Tibial artery (tissue), 4 donors: ENCODE measurements at regions of chr3 and their contacts with region 1.

Region 1: GRCh38 chr3:186361762-186362536 is at the start of gene DGKG:
- DNase-seq: peak; percentile 73 to 90
- H3K4me3 ChIP-seq: peak within 1 kb of the TSS; percentile 66 to 91
- H3K27ac ChIP-seq: peak within 1 kb of the TSS; percentile 76 to 86
- H3K4me1 ChIP-seq: peaks cover 0 to 57% (median 35%) of the 10 kb centered on the region in 4 donors
- H3K27me3 ChIP-seq: no peaks in the 10 kb centered on the region
- CTCF ChIP-seq: no peak

Region 2: GRCh38 chr3:186277268-186277909 is 84.6 kb before region 1 on chr3:
- intact Hi-C with region 1: loop called (anchors 5 kb)
- DNase-seq: no peak
- H3K4me3 ChIP-seq: no peak overlapping the region
- H3K27ac ChIP-seq: no peak overlapping the region
- H3K4me1 ChIP-seq: peaks cover 0 to 16% (median 12%) of the 10 kb centered on the region in 4 donors
- H3K27me3 ChIP-seq: no peaks in the 10 kb centered on the region
- CTCF ChIP-seq: peak in 1 of 2 experiments; percentile 21

Region 3: GRCh38 chr3:186394566-186395217 is 32.7 kb after region 1 on chr3:
- intact Hi-C with region 1: no loop called
- DNase-seq: no peak
- H3K4me3 ChIP-seq: no peak overlapping the region
- H3K27ac ChIP-seq: no peak overlapping the region
- H3K4me1 ChIP-seq: no peaks in the 10 kb centered on the region
- H3K27me3 ChIP-seq: no peaks in the 10 kb centered on the region
- CTCF ChIP-seq: no peak

Region 4: DNA sequence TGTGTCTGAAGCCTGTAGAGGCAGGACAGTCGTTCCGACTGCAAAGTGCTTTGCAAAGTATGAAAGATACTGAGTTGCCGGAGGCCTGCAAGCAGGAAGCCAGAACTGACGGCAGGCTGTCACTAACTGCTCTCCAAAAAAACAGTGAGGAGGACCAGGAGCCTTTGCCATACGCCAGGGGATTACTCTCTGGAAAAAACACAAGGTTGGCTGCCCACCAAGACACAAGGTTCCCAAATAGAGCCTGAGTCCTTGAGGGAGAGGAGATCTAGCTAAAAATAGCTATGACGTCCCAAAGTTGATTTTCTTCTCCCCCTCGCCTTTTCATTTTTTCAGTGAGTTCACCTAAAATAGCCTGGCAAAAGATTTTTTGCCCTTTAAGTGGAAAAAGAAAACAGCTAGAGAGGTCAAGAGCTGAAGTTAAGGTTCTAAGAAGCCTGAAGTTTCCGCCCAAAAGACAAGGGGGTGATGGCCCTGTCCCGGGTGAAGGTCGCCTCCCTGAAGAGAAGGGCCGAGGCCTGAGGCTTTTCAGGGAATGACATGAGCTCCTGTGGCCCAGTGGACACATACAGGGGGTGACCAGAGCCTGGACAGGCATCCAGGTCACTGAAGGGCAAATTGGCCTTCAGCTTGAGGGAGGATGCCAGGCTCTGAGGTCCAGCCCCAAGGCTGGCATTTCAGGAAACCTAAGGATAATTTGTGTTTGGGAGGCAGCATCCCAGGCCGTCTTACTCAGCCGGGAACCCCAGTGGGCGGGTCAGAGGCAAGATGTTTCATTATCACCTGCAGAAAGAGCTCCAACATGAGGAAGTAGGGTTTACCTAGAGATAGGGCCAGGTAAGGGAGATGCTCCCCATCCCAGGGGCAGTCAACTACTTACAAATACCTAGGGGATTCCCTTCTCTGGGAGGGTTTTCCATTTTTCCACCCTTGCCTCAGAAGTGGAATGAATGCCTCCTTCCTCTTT is 45.0 kb after region 1 on chr3:
- intact Hi-C with region 1: loop called (anchors 5 kb)
- DNase-seq: peak; percentile 80 to 94
- H3K4me3 ChIP-seq: peak overlapping the region in 1 of 2 donors; percentile 4
- H3K27ac ChIP-seq: peak overlapping the region; percentile 90 to 92
- H3K4me1 ChIP-seq: peaks cover 0 to 35% (median 20%) of the 10 kb centered on the region in 4 donors
- H3K27me3 ChIP-seq: no peaks in the 10 kb centered on the region
- CTCF ChIP-seq: no peak

Region 5: DNA sequence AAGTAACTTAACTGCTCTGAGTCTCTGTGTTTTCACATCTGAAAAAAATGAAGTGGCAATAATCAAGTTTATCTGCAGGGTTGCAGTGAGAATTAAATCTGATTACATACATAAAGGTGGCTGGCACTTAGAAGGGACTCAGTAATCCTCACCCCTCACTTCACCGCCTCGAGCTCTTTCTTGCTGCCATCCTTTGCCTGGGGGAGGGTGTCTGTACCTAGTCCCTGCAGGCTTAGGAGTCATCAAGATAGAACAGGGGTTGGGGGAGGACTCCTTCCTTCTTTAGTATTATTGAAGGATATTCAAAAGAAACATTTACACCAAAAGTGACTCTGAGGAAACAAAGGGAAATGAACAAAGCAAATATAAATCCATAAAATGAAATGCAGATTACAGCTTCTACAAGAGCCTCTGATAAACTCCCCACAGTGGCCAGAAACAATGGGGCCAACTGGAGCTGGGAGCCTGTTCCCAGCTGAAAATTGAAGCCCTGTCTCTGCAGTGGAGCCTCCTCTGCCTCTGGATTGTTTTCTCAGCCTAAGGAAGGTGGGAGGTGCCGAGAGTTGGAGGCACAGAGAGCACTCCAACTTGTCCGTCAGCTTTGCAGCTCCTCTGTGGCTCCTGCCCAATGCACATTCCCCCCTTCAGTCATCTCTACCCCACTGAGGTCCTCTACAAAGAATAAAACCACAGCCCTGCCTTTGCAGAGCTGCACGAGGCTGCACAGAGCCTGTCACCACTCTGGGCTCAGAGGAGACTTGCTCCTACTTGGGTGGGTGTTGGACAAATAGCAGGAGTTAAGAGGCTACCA is 140.4 kb after region 1 on chr3:
- intact Hi-C with region 1: loop called (anchors 10 kb)
- DNase-seq: no peak
- H3K4me3 ChIP-seq: peak overlapping the region; percentile 9 to 27
- H3K27ac ChIP-seq: no peak overlapping the region
- H3K4me1 ChIP-seq: peaks cover 0 to 17% (median 3%) of the 10 kb centered on the region in 4 donors
- H3K27me3 ChIP-seq: no peaks in the 10 kb centered on the region
- CTCF ChIP-seq: no peak

Region 6: GRCh38 chr3:186976837-186977750 is 615.1 kb after region 1 on chr3:
- intact Hi-C with region 1: loop called (anchors 10 kb)
- DNase-seq: peak; percentile 91 to 96
- H3K4me3 ChIP-seq: peak overlapping the region; percentile 17 to 24
- H3K27ac ChIP-seq: peak overlapping the region; percentile 80 to 88
- H3K4me1 ChIP-seq: peaks cover 4 to 64% (median 51%) of the 10 kb centered on the region in 4 donors
- H3K27me3 ChIP-seq: no peaks in the 10 kb centered on the region
- CTCF ChIP-seq: peak; percentile 28 to 42